ENCODE measurements at regions of chr13 and their contacts with region 1.

Region 1: DNA sequence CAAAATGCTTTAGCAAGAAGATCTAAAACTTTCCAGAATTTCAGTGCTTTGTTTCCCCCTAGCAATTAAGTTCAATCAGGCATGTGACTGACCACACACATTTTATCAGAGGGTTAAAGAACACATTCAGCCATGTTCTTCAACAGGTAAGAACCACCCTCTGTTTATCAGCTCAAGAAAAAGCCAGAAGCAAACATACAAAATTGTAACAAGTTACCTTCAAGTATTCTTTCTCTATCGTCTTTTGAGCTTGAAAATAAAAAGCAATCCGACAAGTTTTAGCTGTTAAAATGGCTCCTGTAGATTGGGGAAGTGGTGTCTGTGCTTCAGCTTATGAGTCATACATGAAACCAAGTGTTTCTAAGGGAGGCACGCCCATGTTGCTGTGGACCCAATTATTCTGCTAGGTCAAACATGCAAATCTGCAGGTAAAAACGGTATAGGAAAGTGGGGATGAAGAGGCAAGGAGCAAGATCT is at the start of gene ELF1:
- DNase-seq: peak in 13 of 14 experiments; percentile 39 to 89 (median 53)
- ATAC-seq: peak; percentile 89
- H3K4me3 ChIP-seq: peak within 1 kb of the TSS; percentile 68
- H3K4me3 Mint-ChIP-seq: peak within 1 kb of the TSS; percentile 94
- H3K27ac ChIP-seq: peak within 1 kb of the TSS; percentile 77 to 85
- H3K27ac Mint-ChIP-seq: peak within 1 kb of the TSS; percentile 94
- H3K4me1 ChIP-seq: no peaks in the 10 kb centered on the region
- H3K4me1 Mint-ChIP-seq: peaks cover 49% of the 10 kb centered on the region
- H3K27me3 ChIP-seq: no peaks in the 10 kb centered on the region
- H3K27me3 Mint-ChIP-seq: no peaks in the 10 kb centered on the region
- CTCF ChIP-seq: no peak
- total RNA-seq, gene ELF1: 354 to 358 TPM

Region 2: GRCh38 chr13:40352380-40352778 is 666.7 kb before region 1 on chr13:
- CTCF ChIA-PET with region 1: no interaction called
- POLR2A ChIA-PET with region 1: no interaction called
- intact Hi-C with region 1: no loop called
- DNase-seq: no peak
- ATAC-seq: no peak
- H3K4me3 ChIP-seq: no peak overlapping the region
- H3K4me3 Mint-ChIP-seq: no peak overlapping the region
- H3K27ac ChIP-seq: no peak overlapping the region
- H3K27ac Mint-ChIP-seq: no peak overlapping the region
- H3K4me1 ChIP-seq: peaks cover 23% of the 10 kb centered on the region
- H3K4me1 Mint-ChIP-seq: peaks cover 41% of the 10 kb centered on the region
- H3K27me3 ChIP-seq: no peaks in the 10 kb centered on the region
- H3K27me3 Mint-ChIP-seq: no peaks in the 10 kb centered on the region
- CTCF ChIP-seq: no peak

Region 3: DNA sequence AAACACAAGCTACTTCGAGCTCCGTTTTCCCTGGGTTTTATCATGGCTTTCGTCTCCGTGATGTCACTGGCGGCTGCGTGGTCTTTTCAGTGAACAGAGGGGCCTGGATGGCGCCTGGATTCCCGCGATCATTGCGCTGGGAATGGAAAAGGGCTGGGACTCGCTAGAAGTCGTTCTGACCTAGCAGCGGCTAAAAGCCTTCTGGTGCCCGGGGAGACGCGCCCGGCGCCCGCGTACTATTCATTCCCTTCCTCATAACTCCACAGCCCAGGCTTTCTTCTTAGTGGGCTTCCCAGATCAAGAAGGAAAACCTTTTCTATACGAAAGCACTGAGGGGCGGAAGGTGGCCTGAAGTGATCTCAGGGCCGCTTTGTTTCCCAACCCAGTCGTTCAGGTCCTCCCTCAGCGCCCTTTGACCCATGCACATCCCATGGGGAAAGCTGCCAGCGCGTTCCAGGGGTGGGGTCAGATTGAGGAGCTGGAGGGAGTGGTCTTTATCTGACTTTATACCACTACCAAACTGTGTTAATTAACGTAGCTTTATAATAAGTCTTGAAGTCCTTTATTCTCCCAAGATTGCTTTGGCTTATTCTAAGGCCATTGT is 96.5 kb before region 1 on chr13:
- CTCF ChIA-PET with region 1: interaction called, 3 read pairs
- POLR2A ChIA-PET with region 1: interaction called, 32 read pairs
- intact Hi-C with region 1: no loop called
- DNase-seq: peak in 2 of 14 experiments; percentile 9 to 37
- ATAC-seq: no peak
- H3K4me3 ChIP-seq: no peak overlapping the region
- H3K4me3 Mint-ChIP-seq: peak overlapping the region; percentile 80
- H3K27ac ChIP-seq: no peak overlapping the region
- H3K27ac Mint-ChIP-seq: peak overlapping the region; percentile 42
- H3K4me1 ChIP-seq: peaks cover 15% of the 10 kb centered on the region
- H3K4me1 Mint-ChIP-seq: peaks cover 25% of the 10 kb centered on the region
- H3K27me3 ChIP-seq: no peaks in the 10 kb centered on the region
- H3K27me3 Mint-ChIP-seq: no peaks in the 10 kb centered on the region
- CTCF ChIP-seq: no peak

Region 4: GRCh38 chr13:40969169-40969901 is 49.7 kb before region 1 on chr13:
- CTCF ChIA-PET with region 1: interaction called, 29 read pairs
- POLR2A ChIA-PET with region 1: interaction called, 29 read pairs
- intact Hi-C with region 1: loop called in 1 of 2 experiments (anchors 10 kb)
- DNase-seq: peak in 7 of 14 experiments; percentile 9 to 62 (median 48)
- ATAC-seq: peak; percentile 63
- H3K4me3 ChIP-seq: no peak overlapping the region
- H3K4me3 Mint-ChIP-seq: peak overlapping the region; percentile 71
- H3K27ac ChIP-seq: no peak overlapping the region
- H3K27ac Mint-ChIP-seq: peak overlapping the region; percentile 34
- H3K4me1 ChIP-seq: peaks cover 44% of the 10 kb centered on the region
- H3K4me1 Mint-ChIP-seq: peaks cover 98% of the 10 kb centered on the region
- H3K27me3 ChIP-seq: no peaks in the 10 kb centered on the region
- H3K27me3 Mint-ChIP-seq: no peaks in the 10 kb centered on the region
- CTCF ChIP-seq: no peak

Region 5: GRCh38 chr13:40974460-40975407 is 44.3 kb before region 1 on chr13:
- CTCF ChIA-PET with region 1: interaction called, 29 read pairs
- POLR2A ChIA-PET with region 1: interaction called, 152 read pairs
- intact Hi-C with region 1: loop called (anchors 5 to 10 kb)
- DNase-seq: peak in 8 of 14 experiments; percentile 17 to 81 (median 32)
- ATAC-seq: peak; percentile 85
- H3K4me3 ChIP-seq: no peak overlapping the region
- H3K4me3 Mint-ChIP-seq: peak overlapping the region; percentile 77
- H3K27ac ChIP-seq: peak overlapping the region in 1 of 2 donors; percentile 46
- H3K27ac Mint-ChIP-seq: peak overlapping the region; percentile 92
- H3K4me1 ChIP-seq: peaks cover 37% of the 10 kb centered on the region
- H3K4me1 Mint-ChIP-seq: peaks cover 94% of the 10 kb centered on the region
- H3K27me3 ChIP-seq: no peaks in the 10 kb centered on the region
- H3K27me3 Mint-ChIP-seq: no peaks in the 10 kb centered on the region
- CTCF ChIP-seq: peak; percentile 70

Region 6: DNA sequence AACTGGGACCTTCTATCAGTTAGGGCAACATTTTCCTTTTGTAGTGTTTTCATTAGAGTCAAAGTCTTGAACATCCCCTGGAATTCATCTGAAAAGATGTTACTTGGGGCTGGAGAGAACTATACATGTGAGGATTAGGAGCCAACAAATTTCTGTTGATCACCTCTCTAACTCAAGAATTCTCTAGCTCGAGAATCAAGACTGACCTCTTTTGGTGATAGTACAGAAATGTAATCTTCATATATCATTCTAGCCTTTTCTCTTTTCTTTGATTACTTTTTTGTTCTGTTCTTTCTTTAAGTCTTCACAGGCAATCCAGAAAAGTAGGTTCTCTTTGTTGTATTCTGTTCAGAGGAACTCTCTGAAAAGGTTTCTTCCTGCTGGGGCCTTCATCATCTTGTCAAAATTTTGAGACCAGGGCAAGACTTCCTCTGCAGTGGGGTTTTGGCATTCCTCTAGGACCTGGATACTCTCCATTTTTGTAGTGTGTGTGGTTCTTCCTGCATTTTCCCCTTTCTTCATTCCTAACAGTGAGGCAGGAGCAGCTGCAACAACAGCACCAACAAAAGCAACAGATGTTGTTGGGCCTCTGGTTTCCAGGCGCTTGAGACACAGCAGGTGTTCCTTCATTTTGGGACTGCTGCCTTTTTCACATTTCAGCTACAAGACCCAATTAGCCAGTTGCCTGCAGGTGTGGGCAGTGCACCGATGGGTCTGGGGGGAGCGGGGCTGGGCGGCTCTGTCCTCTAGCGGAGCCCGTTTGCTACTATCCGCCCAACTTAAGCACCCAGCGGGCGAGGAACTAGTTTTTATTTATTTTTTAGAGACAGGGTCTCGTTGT is 26.2 kb before region 1 on chr13:
- CTCF ChIA-PET with region 1: interaction called, 5 read pairs
- POLR2A ChIA-PET with region 1: interaction called, 16 read pairs
- intact Hi-C with region 1: no loop called
- DNase-seq: peak in 3 of 14 experiments; percentile 40 to 63 (median 62)
- ATAC-seq: peak; percentile 52
- H3K4me3 ChIP-seq: no peak overlapping the region
- H3K4me3 Mint-ChIP-seq: peak overlapping the region; percentile 16
- H3K27ac ChIP-seq: peak overlapping the region; percentile 49 to 55
- H3K27ac Mint-ChIP-seq: peak overlapping the region; percentile 84
- H3K4me1 ChIP-seq: peaks cover 50% of the 10 kb centered on the region
- H3K4me1 Mint-ChIP-seq: peaks cover 92% of the 10 kb centered on the region
- H3K27me3 ChIP-seq: no peaks in the 10 kb centered on the region
- H3K27me3 Mint-ChIP-seq: no peaks in the 10 kb centered on the region
- CTCF ChIP-seq: peak; percentile 40

Region 7: DNA sequence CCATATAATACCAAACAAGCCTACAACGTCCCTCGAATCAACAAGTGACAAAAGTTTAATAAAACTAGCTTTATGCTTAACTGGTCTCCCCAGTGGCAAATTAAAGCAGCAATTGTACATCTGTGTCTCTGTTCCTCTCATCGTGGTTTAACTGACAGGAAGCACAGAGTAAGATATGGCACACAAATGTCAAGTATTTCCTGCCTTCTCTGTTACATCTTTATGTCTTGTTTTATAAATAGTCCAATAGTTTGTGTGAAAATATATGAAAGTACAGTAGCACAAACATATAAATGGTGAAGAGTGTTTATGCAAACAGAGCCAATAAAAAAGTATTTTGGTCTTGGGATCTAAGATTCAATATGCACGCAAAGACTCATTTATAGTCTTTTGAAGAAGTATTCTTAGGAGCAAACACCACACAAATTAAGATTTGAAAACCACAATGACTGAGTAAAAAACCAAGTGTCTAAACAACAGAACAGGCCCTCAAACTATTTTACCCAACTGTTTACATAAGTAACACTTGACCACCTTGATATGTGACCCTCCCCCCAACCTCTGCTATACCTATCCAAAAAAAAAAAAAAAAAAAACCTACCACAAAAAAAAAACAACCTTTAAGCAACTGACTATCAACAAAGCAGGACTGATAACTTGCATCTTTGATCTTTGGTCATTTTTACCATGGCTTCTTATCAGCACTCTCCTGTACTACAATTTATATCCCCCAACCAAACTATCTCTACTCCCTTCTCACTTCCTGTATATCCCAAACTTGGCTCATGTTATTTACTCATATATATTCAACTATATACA is 14.0 kb before region 1 on chr13:
- CTCF ChIA-PET with region 1: interaction called, 23 read pairs
- POLR2A ChIA-PET with region 1: interaction called, 102 read pairs
- intact Hi-C with region 1: loop called in 1 of 2 experiments (anchors 1 kb)
- DNase-seq: peak in 4 of 14 experiments; percentile 19 to 82 (median 76)
- ATAC-seq: peak; percentile 85
- H3K4me3 ChIP-seq: peak overlapping the region; percentile 21
- H3K4me3 Mint-ChIP-seq: peak overlapping the region; percentile 80
- H3K27ac ChIP-seq: peak overlapping the region; percentile 51 to 69
- H3K27ac Mint-ChIP-seq: peak overlapping the region; percentile 91
- H3K4me1 ChIP-seq: peaks cover 44% of the 10 kb centered on the region
- H3K4me1 Mint-ChIP-seq: peaks cover 77% of the 10 kb centered on the region
- H3K27me3 ChIP-seq: no peaks in the 10 kb centered on the region
- H3K27me3 Mint-ChIP-seq: no peaks in the 10 kb centered on the region
- CTCF ChIP-seq: no peak